Sigmoid colon (tissue), 7 donors: ENCODE measurements at regions of chr2 and their contacts with region 1.

Region 1: GRCh38 chr2:64523666-64524603 is at the start of gene AFTPH:
- DNase-seq: peak; percentile 100
- H3K4me3 ChIP-seq: peak within 1 kb of the TSS; percentile 85 to 97 (median 92)
- H3K27ac ChIP-seq: peak within 1 kb of the TSS; percentile 96 to 98 (median 96)
- H3K4me1 ChIP-seq: peaks cover 0 to 31% (median 14%) of the 10 kb centered on the region in 4 donors
- H3K27me3 ChIP-seq: no peaks in the 10 kb centered on the region
- CTCF ChIP-seq: no peak
- EP300 ChIP-seq: peak in 1 of 4 donors; percentile 74
- POLR2A ChIP-seq: peak; percentile 86 to 91
- total RNA-seq, gene AFTPH: 35.7 to 52.2 (median 41.1) TPM

Region 2: DNA sequence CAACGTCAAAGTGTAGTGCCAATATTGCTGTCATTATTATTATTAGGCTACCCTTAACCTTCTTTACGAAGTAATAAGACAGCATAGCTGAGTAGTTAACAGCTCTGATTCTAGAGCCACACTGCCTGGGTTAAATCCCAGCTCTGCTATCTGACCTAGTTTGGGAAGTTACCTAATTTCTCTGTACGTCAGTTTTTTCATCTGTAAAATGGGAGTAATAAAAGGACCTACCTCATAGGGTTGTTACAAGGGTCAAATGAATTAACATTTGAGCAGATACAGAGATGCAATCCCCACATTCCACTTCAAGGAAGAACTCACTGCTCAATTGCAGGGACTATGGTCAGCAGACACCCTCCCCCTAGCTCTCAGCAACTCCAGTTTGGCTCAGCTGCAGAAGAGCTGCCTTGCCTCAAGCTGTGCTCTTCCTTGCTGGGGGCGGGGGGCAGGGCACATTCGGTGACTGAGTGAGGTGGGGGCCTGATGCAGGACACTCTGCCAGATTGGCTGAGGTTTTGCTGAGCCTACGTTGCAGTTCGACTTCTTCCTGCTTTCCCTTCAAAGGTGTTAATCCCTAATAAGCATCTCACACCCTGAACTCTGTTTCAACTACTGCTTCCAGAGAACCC is 81.0 kb before region 1 on chr2:
- intact Hi-C with region 1: no loop called
- DNase-seq: no peak
- H3K4me3 ChIP-seq: no peak overlapping the region
- H3K27ac ChIP-seq: no peak overlapping the region
- H3K4me1 ChIP-seq: no peaks in the 10 kb centered on the region
- H3K27me3 ChIP-seq: no peaks in the 10 kb centered on the region
- CTCF ChIP-seq: no peak
- EP300 ChIP-seq: no peak
- POLR2A ChIP-seq: no peak

Region 3: DNA sequence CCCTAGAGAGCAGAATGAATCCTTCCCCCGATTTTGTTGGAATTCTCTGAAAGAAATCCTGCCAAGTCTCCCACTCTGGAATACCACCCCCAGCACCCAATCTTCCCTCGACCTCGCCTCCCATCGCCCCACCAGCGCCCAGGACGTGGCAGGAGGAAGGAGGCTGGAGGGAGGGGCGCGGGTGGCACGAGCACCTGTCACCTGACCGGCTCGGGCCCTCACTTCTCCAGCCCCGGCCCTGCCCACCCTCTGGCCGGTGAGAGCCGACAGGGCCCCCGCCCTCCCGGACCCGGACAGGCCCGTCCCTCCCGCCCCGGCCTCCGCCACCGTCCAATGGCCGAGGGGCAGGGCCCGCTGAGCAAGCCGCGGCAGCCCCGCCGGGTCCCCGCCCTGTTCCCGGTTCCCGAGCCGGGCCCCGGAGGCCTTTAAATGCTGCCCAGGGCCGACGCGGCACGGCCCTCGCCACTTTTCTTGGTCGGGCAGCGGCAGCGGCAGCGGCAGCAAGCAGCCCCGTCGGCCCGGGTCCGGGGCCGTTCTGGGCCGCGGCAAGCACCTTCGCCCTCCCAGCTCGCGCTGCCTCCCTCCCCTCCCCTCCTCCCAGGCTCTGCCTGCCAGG is 70.1 kb before region 1 on chr2 and contains the start of gene LGALSL:
- intact Hi-C with region 1: loop called (anchors 5 kb)
- DNase-seq: peak; percentile 86
- H3K4me3 ChIP-seq: peak within 1 kb of the TSS; percentile 58 to 92 (median 90)
- H3K27ac ChIP-seq: peak within 1 kb of the TSS; percentile 94 to 98 (median 97)
- H3K4me1 ChIP-seq: peaks cover 0 to 21% (median 15%) of the 10 kb centered on the region in 4 donors
- H3K27me3 ChIP-seq: no peaks in the 10 kb centered on the region
- CTCF ChIP-seq: no peak
- EP300 ChIP-seq: no peak
- POLR2A ChIP-seq: peak; percentile 36 to 37
- total RNA-seq, gene LGALSL: 7.1 to 10.4 (median 9.0) TPM

Region 4: DNA sequence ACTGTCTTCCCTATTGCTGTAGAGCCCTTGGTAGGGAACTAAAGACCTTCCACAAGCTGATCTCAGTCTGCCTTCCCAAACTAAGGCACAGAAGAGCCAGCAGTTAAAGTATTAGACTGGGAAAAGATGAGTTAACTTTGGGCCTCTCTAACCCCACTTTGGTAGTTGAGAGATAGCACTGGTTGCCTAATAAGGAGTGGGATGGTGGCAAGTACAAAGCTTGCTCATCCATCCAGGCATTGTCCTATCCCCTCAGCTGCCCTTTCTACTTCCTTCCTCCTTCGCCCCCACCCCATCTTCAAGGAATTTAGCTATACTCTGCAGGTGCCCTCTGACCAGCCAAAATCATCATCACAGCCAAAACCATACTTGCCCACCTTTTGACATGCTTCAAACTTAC is 22.0 kb before region 1 on chr2:
- intact Hi-C with region 1: no loop called
- DNase-seq: no peak
- H3K4me3 ChIP-seq: no peak overlapping the region
- H3K27ac ChIP-seq: no peak overlapping the region
- H3K4me1 ChIP-seq: no peaks in the 10 kb centered on the region
- H3K27me3 ChIP-seq: no peaks in the 10 kb centered on the region
- CTCF ChIP-seq: no peak
- EP300 ChIP-seq: no peak
- POLR2A ChIP-seq: no peak

Region 5: DNA sequence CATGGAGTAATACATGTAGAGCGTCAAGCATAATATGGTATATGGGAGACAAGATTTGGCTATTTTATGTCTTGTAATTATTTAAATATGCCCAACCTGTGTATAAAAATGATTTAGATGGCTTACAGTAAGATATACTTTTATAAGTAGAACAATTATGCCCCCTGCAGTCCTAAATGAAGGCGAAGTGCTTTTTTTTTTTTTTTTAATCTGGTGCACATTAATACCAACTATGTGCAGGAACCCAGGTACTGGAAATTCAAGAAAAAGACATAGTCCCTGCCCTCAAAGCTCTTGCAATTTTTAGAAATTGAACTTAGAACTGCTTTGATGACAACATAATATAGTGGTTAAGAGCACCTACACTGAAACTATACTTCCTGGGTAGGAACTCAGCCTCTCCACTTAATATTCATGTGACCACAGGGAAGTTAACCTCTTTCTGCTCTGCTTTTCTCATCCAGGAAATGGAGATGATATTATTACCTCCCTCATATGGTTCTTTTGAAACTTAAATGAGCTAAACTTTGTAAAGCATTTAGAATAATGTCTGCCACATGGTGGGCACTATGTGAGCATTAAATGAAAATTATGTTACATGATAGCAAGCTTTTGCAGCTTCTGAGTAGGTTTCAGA is 38.3 kb after region 1 on chr2:
- intact Hi-C with region 1: loop called (anchors 5 kb)
- DNase-seq: no peak
- H3K4me3 ChIP-seq: no peak overlapping the region
- H3K27ac ChIP-seq: no peak overlapping the region
- H3K4me1 ChIP-seq: peaks cover 0 to 11% (median 0%) of the 10 kb centered on the region in 4 donors
- H3K27me3 ChIP-seq: no peaks in the 10 kb centered on the region
- CTCF ChIP-seq: peak in 1 of 4 experiments; percentile 43
- EP300 ChIP-seq: no peak
- POLR2A ChIP-seq: no peak

Region 6: GRCh38 chr2:64644177-64645004 is 120.5 kb after region 1 on chr2:
- intact Hi-C with region 1: loop called (anchors 5 kb)
- DNase-seq: peak; percentile 92
- H3K4me3 ChIP-seq: peak overlapping the region; percentile 31 to 52 (median 46)
- H3K27ac ChIP-seq: peak overlapping the region; percentile 90 to 93 (median 91)
- H3K4me1 ChIP-seq: peaks cover 0 to 68% (median 57%) of the 10 kb centered on the region in 4 donors
- H3K27me3 ChIP-seq: no peaks in the 10 kb centered on the region
- CTCF ChIP-seq: no peak
- EP300 ChIP-seq: no peak
- POLR2A ChIP-seq: peak; percentile 77 to 91

Region 7: DNA sequence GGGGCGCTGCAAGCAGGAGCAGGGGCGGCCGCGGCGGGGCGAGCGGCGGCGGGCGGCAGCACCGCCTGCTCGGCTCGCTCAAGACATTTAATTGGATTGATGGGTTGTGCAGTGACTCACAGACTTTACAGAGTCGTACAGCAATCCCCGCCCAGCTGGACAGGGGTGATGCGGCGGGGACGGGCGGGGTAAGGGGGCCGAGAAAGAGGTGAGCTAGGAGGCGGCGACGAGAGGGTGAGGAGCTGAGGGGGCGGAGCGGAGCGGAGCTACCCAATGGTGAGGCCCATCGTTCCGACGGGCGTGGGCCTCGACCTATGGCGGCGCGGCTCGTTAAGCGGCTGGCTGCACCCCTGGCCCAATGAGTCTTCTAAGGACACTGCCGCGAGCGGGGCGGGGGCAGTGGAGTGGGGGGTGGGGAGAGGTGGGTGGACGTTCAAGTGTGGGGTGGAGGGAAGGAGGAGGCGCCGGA is 226.9 kb after region 1 on chr2:
- intact Hi-C with region 1: loop called (anchors 10 kb)
- DNase-seq: peak; percentile 100
- H3K4me3 ChIP-seq: peak overlapping the region; percentile 67 to 78 (median 72)
- H3K27ac ChIP-seq: peak overlapping the region; percentile 94 to 98 (median 98)
- H3K4me1 ChIP-seq: peaks cover 0 to 26% (median 14%) of the 10 kb centered on the region in 4 donors
- H3K27me3 ChIP-seq: no peaks in the 10 kb centered on the region
- CTCF ChIP-seq: no peak
- EP300 ChIP-seq: peak in 2 of 4 donors; percentile 3 to 15
- POLR2A ChIP-seq: peak; percentile 98 to 99

Region 8: DNA sequence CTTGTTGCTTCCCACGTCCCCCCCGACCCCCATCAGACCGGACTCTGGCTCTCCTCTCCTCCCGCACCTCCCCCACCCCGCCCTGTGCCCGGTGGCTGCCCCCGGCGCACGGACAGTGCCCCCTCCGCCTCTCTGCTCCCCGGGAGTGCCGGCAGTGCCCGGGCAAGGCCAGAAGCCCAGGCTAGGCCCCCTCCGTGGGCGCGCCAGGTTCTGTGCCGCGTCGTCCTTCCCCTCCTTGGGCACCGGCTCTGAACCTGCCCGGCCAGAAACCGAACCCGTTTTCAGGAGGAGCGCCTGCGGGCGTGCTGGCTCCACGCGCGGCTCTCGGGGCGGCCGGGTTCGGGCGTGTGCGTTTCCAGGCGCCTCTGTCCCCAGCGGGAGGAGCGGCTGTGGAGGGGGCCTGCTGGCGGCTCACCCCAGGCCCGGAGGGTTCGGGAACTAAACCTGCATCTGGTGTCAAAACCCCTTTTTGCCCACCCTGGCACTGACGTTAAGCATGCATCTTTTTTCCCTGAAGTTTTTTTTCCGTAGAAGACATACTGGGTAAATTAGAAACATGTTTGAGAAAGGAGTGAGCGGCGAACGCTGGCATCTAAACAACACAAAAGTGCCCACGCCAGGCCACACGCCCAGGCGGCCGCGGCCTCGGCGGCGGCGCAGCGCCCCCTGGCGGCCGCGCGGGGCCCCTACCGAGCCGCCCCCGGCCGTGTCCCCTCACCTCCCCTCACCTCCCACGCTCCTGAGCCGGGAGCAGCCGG is 341.3 kb after region 1 on chr2:
- intact Hi-C with region 1: loop called (anchors 2 kb)
- DNase-seq: peak; percentile 84
- H3K4me3 ChIP-seq: peak overlapping the region; percentile 60 to 67 (median 64)
- H3K27ac ChIP-seq: peak overlapping the region; percentile 86 to 93 (median 90)
- H3K4me1 ChIP-seq: peaks cover 0 to 20% (median 15%) of the 10 kb centered on the region in 4 donors
- H3K27me3 ChIP-seq: no peaks in the 10 kb centered on the region
- CTCF ChIP-seq: peak in 2 of 4 experiments; percentile 24 to 67
- EP300 ChIP-seq: no peak
- POLR2A ChIP-seq: no peak

Region 9: DNA sequence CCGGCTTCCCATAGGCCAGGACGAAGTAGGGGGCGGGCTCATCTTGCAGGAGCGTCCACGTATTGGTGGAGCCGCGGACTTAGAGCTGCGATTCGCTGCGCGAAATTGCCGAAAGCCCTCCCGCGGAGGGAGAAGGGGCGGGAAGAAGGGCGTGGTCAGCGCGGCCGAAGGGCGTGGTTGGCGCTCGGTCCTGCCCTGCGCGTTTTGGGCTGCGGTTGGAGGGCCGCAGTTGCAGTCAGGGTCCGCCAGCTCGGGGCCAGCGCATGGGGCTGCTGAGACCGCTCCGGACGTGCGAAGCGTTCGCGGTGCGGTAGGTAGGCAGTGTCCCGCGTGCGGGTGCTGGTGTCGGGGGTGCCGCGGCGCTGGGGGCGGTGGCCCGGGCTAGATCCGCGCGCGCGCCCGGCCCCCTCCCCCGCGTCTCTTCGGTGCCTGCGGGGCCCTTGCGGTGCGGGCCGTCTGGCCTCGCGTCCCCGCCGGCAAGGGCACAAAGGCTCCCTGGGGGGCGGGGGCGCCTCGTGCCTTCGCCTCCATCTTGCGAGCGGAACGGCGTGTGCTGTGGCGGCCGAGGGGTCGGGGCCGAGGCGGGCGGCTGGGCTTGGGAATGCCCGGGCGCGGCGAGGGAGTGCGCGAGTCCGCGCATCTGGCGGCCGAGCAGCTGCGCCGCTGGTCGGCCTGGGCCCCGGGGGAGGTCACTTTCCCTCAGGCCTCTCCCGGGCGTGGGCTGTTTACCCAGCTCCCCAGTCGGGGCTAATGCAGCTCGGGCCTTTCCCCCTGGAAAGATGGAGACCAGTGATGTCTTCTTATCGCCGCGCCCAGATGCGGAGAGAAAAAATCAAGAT is 532.5 kb after region 1 on chr2 and contains the start of gene CEP68:
- intact Hi-C with region 1: loop called (anchors 5 kb)
- DNase-seq: peak; percentile 99
- H3K4me3 ChIP-seq: peak within 1 kb of the TSS; percentile 57 to 95 (median 88)
- H3K27ac ChIP-seq: peak within 1 kb of the TSS; percentile 93 to 96 (median 94)
- H3K4me1 ChIP-seq: peaks cover 0 to 52% (median 47%) of the 10 kb centered on the region in 4 donors
- H3K27me3 ChIP-seq: no peaks in the 10 kb centered on the region
- CTCF ChIP-seq: no peak
- EP300 ChIP-seq: no peak
- POLR2A ChIP-seq: peak; percentile 30 to 76
- total RNA-seq, gene CEP68: 24.4 to 32.1 (median 28.6) TPM